Right ventricle myocardium inferior (tissue), 1 donor: ENCODE measurements at regions of chr14 and their contacts with region 1.

Region 1: DNA sequence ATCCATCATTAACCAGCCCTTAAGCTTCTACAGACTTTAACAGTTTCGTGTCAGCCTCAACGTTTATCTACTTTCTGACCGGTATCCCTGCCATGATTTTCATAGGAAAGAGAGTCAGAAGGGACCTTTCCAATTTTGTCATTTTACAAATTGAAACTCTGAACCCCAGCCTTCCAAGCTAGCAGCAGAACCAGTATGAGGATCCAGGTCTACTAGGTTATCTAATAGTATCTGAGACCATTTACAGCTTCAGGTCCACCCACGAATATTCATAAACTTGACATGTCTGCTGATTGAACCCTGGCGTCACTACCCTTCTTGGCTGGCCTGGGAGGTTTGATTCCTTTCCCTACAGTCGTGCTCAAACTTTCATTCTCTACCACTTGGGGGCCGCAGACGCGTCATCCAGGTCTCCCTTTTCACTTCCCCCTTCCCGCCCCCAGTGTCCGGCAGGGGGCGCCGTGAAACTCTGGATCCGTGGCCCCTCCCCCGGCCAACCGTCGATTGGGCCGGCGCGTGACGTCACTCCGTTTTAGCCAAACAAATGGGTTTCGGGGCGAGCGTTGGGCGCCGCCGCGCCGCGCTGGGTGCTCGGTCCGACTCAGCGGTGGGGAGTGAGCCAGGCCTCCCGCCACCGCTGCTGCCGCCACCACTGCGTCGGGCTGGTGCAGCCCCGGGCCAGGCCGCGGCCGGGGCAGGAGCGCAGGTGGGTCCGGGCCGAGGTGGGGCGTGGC is at the start of gene FBXO34:
- DNase-seq: peak; percentile 100
- ATAC-seq: peak; percentile 96
- total RNA-seq, gene FBXO34: 24.5 TPM

Region 2: DNA sequence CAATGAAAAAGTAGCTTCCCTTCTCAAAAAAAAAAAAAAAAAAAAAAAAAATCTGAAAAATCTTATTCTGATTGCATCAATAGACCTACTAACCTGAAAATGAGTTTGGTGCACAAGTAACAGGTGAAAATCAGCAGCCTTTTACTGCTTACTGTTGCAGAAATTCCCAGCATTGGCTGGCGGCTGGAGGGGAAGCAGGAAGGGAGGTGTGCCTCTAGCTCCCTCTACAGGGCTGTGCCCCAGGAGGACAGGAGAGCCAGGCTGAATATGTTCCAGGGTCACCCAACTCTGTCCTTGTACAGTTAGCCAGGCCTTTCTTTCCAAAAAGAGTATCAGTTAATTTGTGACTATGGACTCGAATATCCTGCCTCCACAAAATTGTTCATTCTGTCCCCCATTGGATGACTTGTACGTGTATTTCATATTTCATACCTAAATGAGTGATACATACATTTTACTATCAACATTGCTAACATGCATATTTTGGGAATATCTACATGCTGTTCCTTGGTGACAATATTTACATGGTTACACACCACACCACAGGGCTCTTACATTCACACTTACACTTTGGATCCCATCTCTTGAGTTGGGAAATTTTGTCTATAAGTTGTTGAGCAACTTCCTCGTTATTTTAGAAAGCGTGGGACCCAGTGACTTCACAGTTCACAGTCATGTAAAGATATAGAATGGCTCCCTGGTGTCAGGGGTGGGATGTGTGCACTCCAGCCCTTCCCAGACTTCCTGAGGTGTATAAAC is 579.3 kb before region 1 on chr14:
- intact Hi-C with region 1: no loop called
- DNase-seq: peak; percentile 82
- ATAC-seq: peak; percentile 86

Region 3: DNA sequence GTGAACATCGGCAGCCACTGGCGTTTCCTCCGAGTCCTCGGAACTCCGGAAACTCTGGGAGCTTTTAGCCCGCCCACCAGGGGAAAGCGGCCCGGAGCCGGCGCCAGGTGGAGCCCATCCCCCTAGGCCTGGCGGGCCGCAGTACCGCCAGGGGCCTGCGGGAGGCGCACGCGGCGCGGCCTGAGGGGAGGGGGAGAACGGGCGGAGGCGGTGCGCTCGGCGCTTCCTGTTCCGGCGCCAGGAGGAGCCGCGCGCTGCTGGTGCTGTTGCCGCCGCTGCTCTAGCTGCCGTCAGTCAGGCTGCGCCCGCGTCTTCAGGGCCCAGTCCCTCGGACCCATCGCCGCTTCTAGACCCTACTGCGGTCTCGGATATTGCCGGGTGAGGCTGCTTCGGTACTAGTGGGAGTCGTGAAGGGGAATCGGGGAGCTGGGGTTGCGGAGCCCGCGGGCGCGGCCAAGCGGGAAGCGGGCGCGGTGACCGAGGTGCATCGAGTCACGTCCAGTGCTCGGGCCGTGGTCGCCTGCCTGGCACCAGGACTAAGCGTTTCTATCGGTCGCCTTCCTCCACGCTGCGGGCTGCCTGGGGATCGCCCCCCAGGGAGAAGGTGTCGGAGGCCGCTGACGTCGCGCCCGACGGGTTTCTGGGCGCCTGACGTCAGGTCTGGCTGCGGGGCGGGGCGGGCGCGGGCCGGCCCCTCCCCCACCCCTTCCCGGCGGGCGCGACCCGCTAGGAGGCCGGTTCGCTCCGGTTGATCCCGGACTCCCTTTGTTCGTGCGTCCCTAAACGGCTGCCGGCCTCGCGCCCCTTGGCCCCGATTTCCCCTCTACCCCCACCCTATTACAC is 219.4 kb before region 1 on chr14 and contains the start of gene MAPK1IP1L:
- intact Hi-C with region 1: loop called (anchors 10 kb)
- DNase-seq: peak; percentile 95
- ATAC-seq: peak; percentile 98
- total RNA-seq, gene MAPK1IP1L: 65.0 TPM

Region 4: GRCh38 chr14:55301437-55302121 is 30.6 kb after region 1 on chr14:
- intact Hi-C with region 1: loop called (anchors 2 kb)
- DNase-seq: no peak
- ATAC-seq: peak; percentile 84

Region 5: DNA sequence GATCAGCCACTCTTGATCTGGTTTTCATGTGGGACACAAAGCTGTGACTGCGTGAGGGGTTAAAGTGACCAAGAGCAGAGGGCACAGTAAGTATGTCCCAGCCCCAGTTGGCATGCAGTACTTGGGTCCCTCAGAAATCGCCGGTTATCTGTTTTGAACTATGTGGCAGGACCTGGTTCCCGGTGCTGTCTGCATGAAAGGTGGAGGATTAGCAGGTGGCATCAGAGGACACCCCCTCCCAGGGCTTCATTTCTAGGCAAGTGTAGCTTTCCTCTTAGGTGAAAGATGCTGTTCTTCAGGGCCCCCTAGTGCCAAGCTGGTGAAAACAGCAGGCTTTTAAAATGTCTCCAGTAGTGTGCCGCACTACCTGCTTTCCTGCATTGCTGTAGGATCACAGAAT is 83.5 kb after region 1 on chr14:
- intact Hi-C with region 1: loop called (anchors 1 kb)
- DNase-seq: no peak
- ATAC-seq: peak; percentile 61

Region 6: DNA sequence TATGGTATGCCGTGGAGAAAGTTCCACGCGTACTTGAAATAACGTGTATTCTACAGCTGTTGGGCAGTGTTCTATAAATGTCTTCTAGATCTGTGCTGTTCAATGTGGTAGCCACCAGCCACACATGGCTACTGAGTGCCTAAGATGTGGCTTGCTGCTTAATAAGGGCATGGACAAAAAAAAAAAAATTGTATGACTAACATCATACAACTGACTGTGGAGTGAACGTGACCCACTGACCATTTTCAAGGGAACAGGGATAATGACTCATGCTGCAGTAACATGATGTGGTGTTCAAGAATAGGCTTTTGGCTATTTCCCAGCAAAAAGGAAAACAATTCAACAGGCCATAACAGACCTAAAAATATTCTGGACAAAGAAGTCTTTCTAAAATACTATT is 127.7 kb after region 1 on chr14:
- intact Hi-C with region 1: no loop called
- DNase-seq: no peak
- ATAC-seq: peak; percentile 63

Region 7: GRCh38 chr14:55411426-55412389 is 140.7 kb after region 1 on chr14 and contains the start of gene ATG14:
- intact Hi-C with region 1: loop called (anchors 5 kb)
- DNase-seq: peak; percentile 90
- ATAC-seq: peak; percentile 99
- total RNA-seq, gene ATG14: 12.8 TPM

Region 8: DNA sequence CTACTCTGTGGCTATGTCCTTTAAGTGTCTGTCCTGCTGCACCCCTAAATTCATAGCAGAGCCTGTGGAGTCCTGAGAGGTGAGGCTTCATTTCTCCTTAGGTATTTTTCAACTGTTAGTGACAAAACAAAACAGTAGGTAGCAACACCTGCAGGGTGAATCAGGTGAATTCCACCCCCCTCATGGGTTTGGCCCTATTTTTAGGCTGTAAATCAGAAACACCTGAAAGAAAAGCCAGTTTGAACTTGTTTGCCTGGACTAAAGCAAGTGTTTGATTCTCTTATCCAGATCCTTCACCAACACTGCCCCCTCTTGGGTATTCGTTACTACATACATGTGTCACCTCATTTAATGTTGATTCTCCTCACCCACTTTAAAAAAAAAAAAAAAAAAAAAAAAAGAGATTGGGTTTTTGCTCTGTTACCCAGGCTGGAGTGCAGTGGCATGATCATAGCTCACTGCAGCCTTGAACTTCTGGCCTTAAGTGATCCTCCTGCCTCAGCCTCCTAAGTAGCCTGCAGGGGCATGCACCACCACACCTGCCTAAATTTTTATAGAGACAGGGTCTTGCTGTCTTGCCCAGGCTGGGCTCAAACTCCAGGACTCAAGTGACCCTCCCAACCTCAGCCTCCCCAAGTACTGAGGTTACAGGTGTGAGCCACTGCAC is 159.2 kb after region 1 on chr14:
- intact Hi-C with region 1: loop called (anchors 2 kb)
- DNase-seq: no peak
- ATAC-seq: peak; percentile 47